Mammary epithelial cell (primary cell): ENCODE measurements at regions of chr14 and their contacts with region 1.

Region 1: DNA sequence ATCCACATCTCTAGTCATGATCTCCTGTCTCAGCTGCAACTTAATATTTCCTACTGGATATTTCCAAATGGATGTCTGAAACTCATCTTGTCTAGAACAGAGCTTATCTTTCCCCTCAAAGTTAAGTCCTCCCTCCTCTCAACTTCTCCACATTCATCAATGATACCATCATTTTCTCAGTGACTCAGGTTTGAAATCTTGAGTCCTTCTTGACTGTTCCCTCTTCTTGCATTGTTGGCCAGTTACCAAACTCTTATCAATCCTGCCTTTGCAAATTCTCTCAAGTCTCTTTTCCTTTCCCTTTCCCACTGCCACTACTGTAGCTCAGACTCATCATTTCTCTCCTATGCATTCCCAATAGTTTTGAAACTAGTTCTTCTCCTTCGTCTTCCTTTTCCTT is 14.3 kb upstream of the CHURC1 start:
- DNase-seq: no peak
- H3K4me3 ChIP-seq: no peak overlapping the region
- H3K27ac ChIP-seq: no peak overlapping the region
- H3K4me1 ChIP-seq: no peaks in the 10 kb centered on the region
- H3K27me3 ChIP-seq: peaks cover 3% of the 10 kb centered on the region
- CTCF ChIP-seq: no peak

Region 2: DNA sequence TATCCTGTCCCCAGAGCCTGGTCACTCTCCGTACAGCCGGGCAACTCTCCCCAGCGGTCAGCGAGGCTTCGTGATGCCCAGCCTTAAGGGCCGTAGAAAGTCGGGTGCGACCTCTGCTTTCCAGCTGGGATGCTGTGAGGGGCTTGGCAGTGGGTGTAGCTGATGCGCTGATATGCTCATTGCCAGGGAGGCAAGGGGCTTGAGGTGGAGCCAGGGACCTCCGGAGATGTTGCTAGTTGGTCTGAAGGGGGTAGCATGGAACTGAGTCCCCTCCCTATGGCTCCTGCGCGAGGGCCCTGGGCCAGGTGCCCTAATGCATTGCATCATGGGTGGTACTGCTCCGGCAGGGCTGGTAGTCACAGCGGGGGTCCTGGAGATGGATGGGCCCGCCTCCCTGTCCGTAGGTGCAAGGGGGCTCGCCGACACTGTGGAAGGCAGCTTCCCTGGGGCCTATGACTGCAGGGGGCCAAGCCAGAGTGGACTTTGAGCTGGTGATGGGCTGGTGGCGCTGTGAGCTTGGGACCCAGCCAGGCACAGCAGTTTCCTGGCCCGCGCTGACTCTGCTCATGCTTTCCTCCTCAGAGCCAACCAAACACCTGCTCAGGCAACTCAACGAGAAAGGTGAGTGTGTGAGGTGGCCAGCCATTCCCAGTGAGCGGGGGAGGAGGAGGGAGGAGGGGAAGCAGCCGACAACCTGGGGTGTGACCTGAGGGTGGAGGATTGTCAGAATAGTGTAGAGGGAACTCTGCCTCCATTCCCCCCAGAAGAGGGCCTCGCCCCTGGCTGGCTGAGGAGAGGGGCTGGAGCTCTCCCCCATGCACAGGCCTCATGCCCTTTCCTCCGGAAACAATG is 163.5 kb before region 1 on chr14:
- CTCF ChIA-PET with region 1: no interaction called
- dilution Hi-C with region 1: no loop called
- in situ Hi-C with region 1: no loop called
- intact Hi-C with region 1: no loop called
- DNase-seq: no peak
- H3K4me3 ChIP-seq: no peak overlapping the region
- H3K27ac ChIP-seq: no peak overlapping the region
- H3K4me1 ChIP-seq: peaks cover 6% of the 10 kb centered on the region
- H3K27me3 ChIP-seq: no peaks in the 10 kb centered on the region
- CTCF ChIP-seq: no peak

Region 3: GRCh38 chr14:64855721-64856528 is 44.0 kb before region 1 on chr14:
- CTCF ChIA-PET with region 1: no interaction called
- dilution Hi-C with region 1: no loop called
- in situ Hi-C with region 1: no loop called
- intact Hi-C with region 1: no loop called
- DNase-seq: no peak
- H3K4me3 ChIP-seq: no peak overlapping the region
- H3K27ac ChIP-seq: no peak overlapping the region
- H3K4me1 ChIP-seq: no peaks in the 10 kb centered on the region
- H3K27me3 ChIP-seq: no peaks in the 10 kb centered on the region
- CTCF ChIP-seq: no peak

Region 4: GRCh38 chr14:64938972-64939816 is 39.2 kb after region 1 on chr14:
- CTCF ChIA-PET with region 1: interaction called, 10 read pairs
- dilution Hi-C with region 1: no loop called
- in situ Hi-C with region 1: no loop called
- intact Hi-C with region 1: no loop called
- DNase-seq: no peak
- H3K4me3 ChIP-seq: no peak overlapping the region
- H3K27ac ChIP-seq: no peak overlapping the region
- H3K4me1 ChIP-seq: peaks cover 14% of the 10 kb centered on the region
- H3K27me3 ChIP-seq: no peaks in the 10 kb centered on the region
- CTCF ChIP-seq: no peak

Region 5: GRCh38 chr14:64952598-64953309 is 52.8 kb after region 1 on chr14:
- CTCF ChIA-PET with region 1: no interaction called
- dilution Hi-C with region 1: loop called (anchors 5 kb)
- in situ Hi-C with region 1: no loop called
- intact Hi-C with region 1: no loop called
- DNase-seq: no peak
- H3K4me3 ChIP-seq: no peak overlapping the region
- H3K27ac ChIP-seq: no peak overlapping the region
- H3K4me1 ChIP-seq: no peaks in the 10 kb centered on the region
- H3K27me3 ChIP-seq: no peaks in the 10 kb centered on the region
- CTCF ChIP-seq: no peak